Dendritic cell treated with granulocyte-macrophage colony-stimulating factor and Interleukin-4, amounts not matched to agents 40 ng/mL and 50 ng/mL, for 4 days (primary cell): ENCODE measurements at regions of chr15 and their contacts with region 1.

Region 1: DNA sequence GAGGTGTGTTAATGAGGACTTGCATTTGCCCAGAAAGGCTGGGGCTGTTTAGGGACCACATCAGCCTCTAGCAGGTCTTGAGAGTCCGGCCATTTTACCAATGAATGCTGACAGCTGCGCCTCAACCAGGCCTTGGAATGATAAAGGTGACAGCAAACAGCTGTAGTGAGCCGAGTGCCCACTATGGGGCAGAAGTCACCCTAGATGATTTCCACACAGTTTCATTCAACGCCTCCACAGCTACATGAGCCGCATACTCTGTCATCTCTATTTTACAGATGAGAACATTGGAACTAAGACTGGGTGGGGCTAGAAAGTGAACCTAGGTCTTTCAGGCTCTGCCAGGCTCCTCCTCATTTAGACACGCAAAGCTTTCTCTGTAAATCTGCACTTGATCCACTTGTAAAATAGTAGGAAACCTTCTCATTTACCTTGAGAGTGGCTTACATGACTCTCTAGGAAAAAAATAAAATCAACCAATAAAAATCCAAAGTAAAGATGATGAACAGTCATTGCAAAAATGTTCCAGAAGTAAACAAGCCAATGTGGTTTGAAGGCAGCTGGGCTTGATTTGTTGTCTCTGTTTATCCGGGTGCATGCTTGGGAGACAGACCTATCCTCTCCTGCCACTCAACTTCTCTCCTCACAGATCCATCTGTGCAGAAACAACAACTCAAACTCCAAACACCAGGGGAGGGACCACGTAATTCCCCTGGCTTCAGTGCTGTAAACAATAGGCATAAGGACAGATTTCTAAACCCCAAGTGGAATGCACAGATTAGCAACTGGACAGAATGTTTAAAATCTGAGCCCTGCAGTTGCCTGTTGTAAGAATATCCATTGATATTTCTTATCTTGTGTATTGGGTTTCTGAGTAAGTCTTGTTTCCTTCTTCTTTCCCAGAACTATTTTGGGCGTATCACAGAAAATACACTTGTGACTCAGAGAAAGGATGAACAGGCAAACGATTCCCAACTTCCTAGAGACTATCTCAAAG is 31.5 kb upstream of the LDHAL6B start:
- H3K4me3 Mint-ChIP-seq: peak overlapping the region; percentile 57
- H3K27ac Mint-ChIP-seq: peak overlapping the region; percentile 99
- H3K4me1 Mint-ChIP-seq: peaks cover 84% of the 10 kb centered on the region
- H3K27me3 Mint-ChIP-seq: no peaks in the 10 kb centered on the region

Region 2: DNA sequence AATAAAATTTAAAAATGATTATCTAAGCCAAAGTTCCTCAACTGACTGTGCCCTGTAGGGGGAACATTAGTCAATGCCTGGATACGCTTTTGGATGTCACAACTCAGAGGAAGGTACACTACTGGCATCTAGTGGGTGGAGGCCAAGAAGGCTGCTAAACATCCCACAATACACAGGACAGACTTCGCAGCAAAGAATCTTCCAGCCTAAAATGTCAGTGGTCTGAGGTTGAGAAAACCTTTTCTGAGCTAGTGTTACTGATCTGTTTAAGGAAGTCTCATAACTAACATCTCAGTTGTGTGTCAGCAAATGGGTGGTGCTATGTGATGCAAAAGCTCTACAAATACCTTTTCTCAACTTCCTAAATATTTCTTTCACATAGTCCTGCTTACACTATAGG is 10.6 kb after region 1 on chr15:
- intact Hi-C with region 1: loop called (anchors 1 kb)
- H3K4me3 Mint-ChIP-seq: no peak overlapping the region
- H3K27ac Mint-ChIP-seq: peak overlapping the region; percentile 81
- H3K4me1 Mint-ChIP-seq: peaks cover 57% of the 10 kb centered on the region
- H3K27me3 Mint-ChIP-seq: no peaks in the 10 kb centered on the region

Region 3: DNA sequence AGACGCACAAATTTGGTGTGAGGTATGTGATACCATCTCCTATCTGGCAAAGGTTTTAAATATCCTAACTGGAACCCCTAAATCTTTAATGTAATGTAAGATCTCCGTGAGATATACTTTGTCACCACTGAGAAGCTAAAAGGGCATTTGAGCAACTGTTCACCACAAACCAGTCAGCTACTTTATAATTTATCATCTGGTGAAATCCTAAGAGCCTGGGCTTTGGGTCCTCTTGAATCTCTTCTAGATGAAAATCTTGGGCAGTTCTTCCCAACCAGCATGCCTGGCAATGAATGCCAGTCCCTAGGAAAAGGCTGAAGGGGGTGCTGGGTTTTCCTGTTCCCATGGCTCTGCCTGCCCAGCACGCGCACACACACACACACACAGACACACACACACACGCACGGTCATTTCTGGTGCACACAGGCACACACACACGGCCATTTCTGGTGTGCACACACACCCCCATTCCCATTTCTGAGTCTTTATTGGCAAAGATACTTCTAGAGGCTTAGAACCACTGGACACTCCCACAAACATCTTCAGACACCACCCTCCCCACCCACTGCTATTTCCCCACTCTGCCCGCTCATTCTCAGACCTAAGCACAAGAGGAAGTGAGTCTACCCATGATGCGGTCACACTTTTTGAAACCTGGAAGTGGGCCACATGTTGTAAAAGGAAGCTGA is 124.9 kb after region 1 on chr15:
- intact Hi-C with region 1: loop called (anchors 5 kb)
- H3K4me3 Mint-ChIP-seq: peak overlapping the region; percentile 51
- H3K27ac Mint-ChIP-seq: peak overlapping the region; percentile 87
- H3K4me1 Mint-ChIP-seq: peaks cover 63% of the 10 kb centered on the region
- H3K27me3 Mint-ChIP-seq: no peaks in the 10 kb centered on the region